ENCODE measurements at regions of chr10 and their contacts with region 1.

Region 1: GRCh38 chr10:27099916-27100812 is at the start of gene ANKRD26:
- DNase-seq: peak; percentile 96
- H3K4me3 Mint-ChIP-seq: peak within 1 kb of the TSS; percentile 83
- H3K27ac Mint-ChIP-seq: peak within 1 kb of the TSS; percentile 92
- H3K4me1 Mint-ChIP-seq: peaks cover 44% of the 10 kb centered on the region
- H3K27me3 Mint-ChIP-seq: peaks cover 2% of the 10 kb centered on the region
- total RNA-seq, gene ANKRD26: 4.6 to 6.6 TPM

Region 2: GRCh38 chr10:26697163-26697921 is 402.8 kb before region 1 on chr10 and contains the start of gene PDSS1:
- CTCF ChIA-PET with region 1: no interaction called
- intact Hi-C with region 1: loop called (anchors 2 kb)
- DNase-seq: peak; percentile 72
- H3K4me3 Mint-ChIP-seq: peak within 1 kb of the TSS; percentile 96
- H3K27ac Mint-ChIP-seq: peak within 1 kb of the TSS; percentile 89
- H3K4me1 Mint-ChIP-seq: peaks cover 39% of the 10 kb centered on the region
- H3K27me3 Mint-ChIP-seq: no peaks in the 10 kb centered on the region
- total RNA-seq, gene PDSS1: 14.5 to 16.0 TPM

Region 3: DNA sequence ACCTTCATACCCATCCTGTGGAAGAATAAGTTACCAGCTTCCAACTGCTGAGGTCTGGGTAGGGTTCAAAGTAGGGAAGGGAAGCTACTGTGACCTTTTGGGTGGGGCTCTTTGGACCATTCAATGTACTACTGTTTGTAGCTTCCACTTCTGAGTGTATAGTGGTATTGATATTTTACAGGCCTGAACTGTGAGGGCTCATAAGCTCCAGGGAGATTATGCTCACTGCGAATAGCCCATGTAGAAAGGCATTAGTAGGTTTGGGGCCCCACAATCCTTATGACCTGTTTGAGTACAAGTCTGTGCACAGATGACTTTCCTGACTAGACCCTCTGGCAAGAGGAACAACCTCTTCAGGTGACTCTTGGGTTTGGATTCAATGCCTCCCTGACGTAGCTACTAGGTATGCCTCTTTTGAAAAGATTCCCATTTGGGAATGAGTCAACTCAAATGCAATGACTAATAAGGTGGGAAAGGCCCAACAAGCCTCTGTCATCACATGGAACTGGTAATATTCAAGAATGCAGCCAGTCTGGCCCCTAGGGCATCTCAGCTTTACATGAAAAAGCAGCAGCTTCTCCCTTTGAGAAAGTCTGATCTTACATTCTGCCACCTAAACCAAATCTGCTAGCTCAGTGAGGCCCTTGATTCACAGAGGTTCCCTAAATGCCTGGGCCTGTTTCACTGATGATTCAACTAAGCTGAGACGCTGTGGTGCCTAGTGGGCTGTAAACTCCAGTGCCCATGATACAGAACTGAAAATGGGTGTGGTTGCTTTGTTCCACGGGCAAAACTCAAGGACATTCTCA is 319.2 kb before region 1 on chr10:
- CTCF ChIA-PET with region 1: no interaction called
- intact Hi-C with region 1: loop called (anchors 2 kb)
- DNase-seq: peak; percentile 70
- H3K4me3 Mint-ChIP-seq: no peak overlapping the region
- H3K27ac Mint-ChIP-seq: peak overlapping the region; percentile 86
- H3K4me1 Mint-ChIP-seq: peaks cover 82% of the 10 kb centered on the region
- H3K27me3 Mint-ChIP-seq: no peaks in the 10 kb centered on the region

Region 4: DNA sequence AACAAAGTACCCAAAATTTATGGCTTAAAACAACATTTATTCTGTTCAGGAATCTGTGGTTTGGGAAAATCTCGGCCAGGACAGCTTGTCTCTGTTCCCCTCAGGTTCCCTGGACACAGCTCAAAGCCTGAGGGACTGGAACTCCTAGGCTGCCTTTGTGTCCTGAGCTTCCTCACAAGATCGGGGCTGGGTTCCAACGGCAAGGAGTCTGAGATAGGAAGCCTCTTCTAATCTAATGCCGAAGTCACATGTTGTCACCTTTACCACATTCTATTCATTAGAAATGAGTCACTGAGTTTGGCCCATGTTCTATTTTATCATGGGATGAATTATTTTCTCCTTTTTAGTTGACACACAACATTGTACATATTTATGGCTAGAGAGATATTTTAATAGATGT is 80.3 kb before region 1 on chr10:
- CTCF ChIA-PET with region 1: no interaction called
- intact Hi-C with region 1: loop called (anchors 2 kb)
- DNase-seq: no peak
- H3K4me3 Mint-ChIP-seq: no peak overlapping the region
- H3K27ac Mint-ChIP-seq: no peak overlapping the region
- H3K4me1 Mint-ChIP-seq: peaks cover 10% of the 10 kb centered on the region
- H3K27me3 Mint-ChIP-seq: no peaks in the 10 kb centered on the region

Region 5: GRCh38 chr10:27155066-27155754 is 55.0 kb after region 1 on chr10 and contains the start of gene MASTL:
- CTCF ChIA-PET with region 1: interaction called, 6 read pairs
- intact Hi-C with region 1: loop called (anchors 1 kb)
- DNase-seq: peak; percentile 95
- H3K4me3 Mint-ChIP-seq: peak within 1 kb of the TSS; percentile 94
- H3K27ac Mint-ChIP-seq: peak within 1 kb of the TSS; percentile 100
- H3K4me1 Mint-ChIP-seq: peaks cover 46% of the 10 kb centered on the region
- H3K27me3 Mint-ChIP-seq: no peaks in the 10 kb centered on the region
- total RNA-seq, gene MASTL: 50.7 to 51.3 TPM